Prostate gland (tissue), 2 donors: ENCODE measurements at regions of chr2 and their contacts with region 1.

Region 1: DNA sequence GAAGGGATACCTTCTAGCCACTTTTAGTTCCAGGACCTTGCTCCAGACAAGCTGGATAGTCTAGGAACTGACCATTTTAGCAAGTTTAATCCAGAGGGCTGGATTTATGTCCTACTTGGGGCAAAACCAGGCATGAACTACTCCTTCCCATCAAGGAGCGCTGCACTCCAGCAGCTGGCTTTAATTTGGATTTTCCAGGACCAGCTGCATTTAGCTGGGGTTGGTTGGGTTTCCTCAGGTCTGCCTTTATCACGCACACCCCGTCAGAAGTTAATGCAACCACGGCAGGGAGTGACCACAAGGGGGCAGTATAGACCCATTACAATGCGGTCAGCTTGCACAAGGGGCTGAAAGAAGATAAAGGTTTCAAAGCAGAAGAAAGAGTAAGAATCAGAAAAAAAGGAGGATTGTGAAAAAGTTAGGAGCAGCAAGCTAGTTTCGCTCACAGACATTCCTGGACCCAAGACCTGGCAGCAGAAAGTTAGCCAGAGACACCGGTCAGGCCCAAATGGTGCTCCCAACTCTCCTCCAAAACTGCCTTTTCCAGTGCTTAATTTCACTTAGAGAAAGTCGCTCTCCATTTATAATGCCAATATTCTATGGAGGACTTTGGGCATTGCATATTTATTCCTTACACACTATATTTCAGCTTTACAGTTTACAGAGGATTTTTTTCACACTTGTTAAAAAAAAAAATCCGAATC is 40.1 kb downstream of the SLC4A1AP start:
- DNase-seq: peak; percentile 88
- H3K4me3 ChIP-seq: no peak overlapping the region
- H3K27ac ChIP-seq: peak overlapping the region; percentile 85 to 89
- H3K4me1 ChIP-seq: peaks cover 14% of the 10 kb centered on the region
- H3K27me3 ChIP-seq: no peaks in the 10 kb centered on the region
- CTCF ChIP-seq: peak; percentile 88 to 97 (median 93)
- POLR2A ChIP-seq: no peak

Region 2: DNA sequence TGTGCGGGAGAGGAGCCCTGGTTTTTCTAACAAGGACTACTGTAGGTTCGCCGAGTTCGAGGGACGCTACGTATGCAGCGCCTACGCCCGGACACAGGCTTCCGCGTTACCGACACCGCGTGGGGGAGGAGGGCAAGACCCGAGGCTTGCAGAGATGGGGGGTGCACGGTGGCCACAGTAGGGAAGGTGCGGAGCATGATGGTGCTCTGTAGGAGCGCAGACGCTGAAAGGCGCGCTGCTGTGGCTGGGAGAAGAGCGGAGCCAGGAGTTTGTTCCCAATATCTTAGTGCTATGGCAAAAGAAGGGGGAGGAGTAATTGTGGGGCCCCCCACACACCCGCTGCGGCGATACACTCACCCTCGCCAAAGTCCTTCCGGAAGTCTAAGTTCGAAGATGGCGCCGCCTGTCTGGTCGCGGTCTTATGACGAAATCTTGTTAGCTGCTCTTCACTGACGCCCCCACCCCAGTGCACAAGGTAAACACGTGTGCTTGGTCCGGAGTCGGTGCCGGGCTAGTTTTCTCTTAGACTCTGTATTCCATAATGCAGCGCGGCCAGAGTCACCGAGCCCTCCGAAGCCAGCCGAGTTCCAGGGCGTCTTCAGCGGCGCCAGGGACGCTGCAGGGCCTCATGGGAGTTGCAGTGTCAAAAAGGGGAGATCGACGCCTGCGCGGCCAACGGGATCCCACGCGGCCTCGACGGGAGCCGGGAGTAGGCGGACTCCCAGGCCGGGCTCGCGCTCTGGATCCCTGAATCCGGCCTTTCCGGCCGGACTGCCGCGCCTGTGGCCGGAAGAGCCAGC is 347.2 kb before region 1 on chr2 and contains the start of gene GTF3C2:
- intact Hi-C with region 1: no loop called
- DNase-seq: peak; percentile 94
- H3K4me3 ChIP-seq: peak within 1 kb of the TSS; percentile 70 to 87
- H3K27ac ChIP-seq: peak within 1 kb of the TSS; percentile 79 to 83
- H3K4me1 ChIP-seq: peaks cover 4% of the 10 kb centered on the region
- H3K27me3 ChIP-seq: no peaks in the 10 kb centered on the region
- CTCF ChIP-seq: no peak
- POLR2A ChIP-seq: peak; percentile 42
- total RNA-seq, gene GTF3C2: 41.2 to 66.1 TPM

Region 3: DNA sequence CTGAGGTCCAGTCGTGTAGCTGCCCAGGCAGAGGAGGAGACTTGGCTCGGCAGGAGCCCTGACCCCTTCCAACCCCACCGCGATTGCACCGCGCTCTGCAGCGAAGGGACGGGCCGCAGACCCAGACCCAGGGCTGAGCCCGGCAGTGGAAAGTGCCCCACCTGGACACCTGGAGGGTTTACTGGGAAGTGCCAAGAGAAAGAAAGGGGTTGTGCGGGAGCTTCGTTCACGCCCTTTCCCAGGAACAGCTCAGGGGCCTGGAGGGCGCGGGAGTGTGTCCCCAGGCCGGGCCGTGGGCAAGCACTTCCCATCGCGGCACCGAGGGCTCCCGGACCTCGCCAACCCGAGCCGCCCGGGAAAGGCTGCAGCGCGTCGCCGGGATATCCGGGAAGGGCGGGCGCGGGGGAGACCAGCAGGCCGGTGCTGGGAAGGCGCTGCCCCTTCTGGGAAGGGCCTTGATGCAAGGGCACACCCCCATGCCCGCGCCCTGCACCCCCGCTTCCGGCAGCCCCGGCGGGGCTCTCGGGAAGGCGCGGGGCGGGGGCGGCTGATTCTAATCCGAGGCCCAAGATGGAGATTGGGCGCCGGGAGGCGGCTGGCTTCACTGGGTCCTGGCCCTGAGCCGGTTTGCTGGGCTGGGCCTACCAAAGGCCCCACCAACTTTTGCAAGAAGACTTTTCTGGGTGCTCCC is 31.6 kb after region 1 on chr2:
- intact Hi-C with region 1: no loop called
- DNase-seq: peak; percentile 81
- H3K4me3 ChIP-seq: peak overlapping the region; percentile 25 to 35
- H3K27ac ChIP-seq: peak overlapping the region; percentile 76 to 80
- H3K4me1 ChIP-seq: no peaks in the 10 kb centered on the region
- H3K27me3 ChIP-seq: no peaks in the 10 kb centered on the region
- CTCF ChIP-seq: peak in 1 of 4 experiments; percentile 14
- POLR2A ChIP-seq: peak; percentile 68

Region 4: GRCh38 chr2:27771548-27772335 is 68.0 kb after region 1 on chr2 and contains the start of gene MRPL33:
- intact Hi-C with region 1: loop called (anchors 2 kb)
- DNase-seq: peak; percentile 92
- H3K4me3 ChIP-seq: peak within 1 kb of the TSS; percentile 62 to 79
- H3K27ac ChIP-seq: peak within 1 kb of the TSS; percentile 79 to 90
- H3K4me1 ChIP-seq: peaks cover 9% of the 10 kb centered on the region
- H3K27me3 ChIP-seq: no peaks in the 10 kb centered on the region
- CTCF ChIP-seq: peak in 1 of 4 experiments; percentile 2
- POLR2A ChIP-seq: peak; percentile 57
- total RNA-seq, gene MRPL33: 140 to 186 TPM

Region 5: GRCh38 chr2:27823569-27823968 is 119.8 kb after region 1 on chr2:
- intact Hi-C with region 1: loop called (anchors 5 kb)
- DNase-seq: no peak
- H3K4me3 ChIP-seq: no peak overlapping the region
- H3K27ac ChIP-seq: no peak overlapping the region
- H3K4me1 ChIP-seq: no peaks in the 10 kb centered on the region
- H3K27me3 ChIP-seq: no peaks in the 10 kb centered on the region
- CTCF ChIP-seq: no peak
- POLR2A ChIP-seq: no peak

Region 6: DNA sequence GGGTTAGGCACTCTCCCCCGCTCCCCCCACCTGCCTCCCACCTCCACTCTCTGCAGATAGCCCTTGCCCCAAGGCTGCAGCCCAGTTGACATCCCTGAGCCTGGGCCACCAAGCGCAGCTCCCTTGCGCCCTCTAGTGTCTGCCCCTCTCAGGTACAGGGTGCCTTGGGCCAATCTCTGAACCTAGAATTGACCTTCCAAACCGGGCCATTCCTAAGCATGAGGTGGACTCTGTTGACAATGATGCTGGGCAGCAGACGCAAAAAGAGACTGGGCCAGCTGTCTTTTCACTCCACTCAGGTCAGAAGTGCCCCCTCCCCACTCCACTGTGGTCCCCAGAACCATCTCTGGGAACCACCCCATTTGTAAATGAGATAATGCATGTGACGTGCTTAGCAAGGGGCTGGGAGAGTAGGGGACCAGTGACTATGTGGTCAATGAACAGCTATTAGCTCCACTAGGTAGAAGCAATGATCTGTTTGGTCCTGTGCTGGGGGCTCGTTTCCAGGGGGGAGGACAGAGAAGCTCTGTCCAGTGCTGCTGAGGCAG is 748.8 kb after region 1 on chr2:
- intact Hi-C with region 1: loop called (anchors 2 kb)
- DNase-seq: peak; percentile 58
- H3K4me3 ChIP-seq: no peak overlapping the region
- H3K27ac ChIP-seq: no peak overlapping the region
- H3K4me1 ChIP-seq: no peaks in the 10 kb centered on the region
- H3K27me3 ChIP-seq: no peaks in the 10 kb centered on the region
- CTCF ChIP-seq: peak; percentile 81 to 90 (median 86)
- POLR2A ChIP-seq: no peak